Common myeloid progenitor, CD34-positive (primary cell): ENCODE measurements at regions of chr5 and their contacts with region 1.

Region 1: DNA sequence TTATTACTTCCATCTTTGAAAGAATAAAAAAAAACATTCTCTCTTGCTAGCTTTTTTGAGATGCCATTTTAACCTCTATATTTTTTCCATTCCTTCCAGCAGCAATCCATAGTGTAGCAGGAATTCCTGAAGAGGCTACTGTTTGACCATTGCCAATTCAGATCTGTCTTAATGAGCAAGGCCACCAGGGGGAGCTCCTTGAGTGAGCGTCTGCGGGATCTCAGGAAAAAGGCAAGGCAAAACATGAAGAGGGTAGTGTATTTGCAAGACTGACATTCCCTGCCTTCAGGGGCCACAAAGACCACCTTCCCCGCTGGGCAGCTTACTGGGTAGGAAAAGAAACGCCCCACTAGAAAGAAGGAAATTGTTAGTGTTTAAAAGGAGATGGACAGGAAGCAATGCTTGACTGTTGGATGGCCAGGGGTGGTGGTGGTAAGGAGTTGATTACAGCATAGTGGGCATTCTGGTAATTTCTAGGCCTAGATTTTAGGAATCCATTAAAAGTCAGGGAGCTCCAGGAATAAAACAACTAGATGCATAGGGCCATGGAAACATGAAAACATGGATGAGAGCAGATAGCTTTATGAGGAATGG is 206.6 kb upstream of the HAPLN1 start:
- DNase-seq: peak; percentile 36 to 42 (median 36)
- H3K4me3 ChIP-seq: no peak overlapping the region
- H3K27ac ChIP-seq: no peak overlapping the region
- H3K4me1 ChIP-seq: peaks cover 0 to 5% (median 2%) of the 10 kb centered on the region in 4 experiments
- H3K27me3 ChIP-seq: no peaks in the 10 kb centered on the region

Region 2: DNA sequence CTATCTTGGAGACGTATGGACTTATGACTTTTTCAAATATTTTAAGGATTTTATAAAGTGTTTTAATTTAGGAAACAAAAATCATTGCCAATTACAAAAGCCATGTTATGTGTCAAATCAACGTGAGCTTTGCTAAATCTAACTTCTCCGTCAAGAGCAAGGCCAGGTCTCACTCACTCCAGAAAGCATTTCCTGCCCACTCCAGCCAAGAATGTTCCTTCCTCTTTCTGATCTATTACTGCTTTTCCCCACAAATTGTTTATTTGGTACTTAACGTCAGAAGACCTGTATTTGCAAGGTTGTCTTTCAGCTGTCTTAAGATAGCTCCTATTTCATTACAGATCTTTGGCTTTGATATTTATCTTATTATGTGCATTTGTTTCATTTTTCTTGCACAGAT is 13.0 kb before region 1 on chr5:
- CTCF ChIA-PET with region 1: interaction called, 37 read pairs
- POLR2A ChIA-PET with region 1: no interaction called
- DNase-seq: peak in 2 of 3 donors; percentile 52 to 56
- H3K4me3 ChIP-seq: no peak overlapping the region
- H3K27ac ChIP-seq: no peak overlapping the region
- H3K4me1 ChIP-seq: peaks cover 0 to 20% (median 10%) of the 10 kb centered on the region in 4 experiments
- H3K27me3 ChIP-seq: no peaks in the 10 kb centered on the region

Region 3: GRCh38 chr5:83942155-83942554 is 14.9 kb after region 1 on chr5:
- CTCF ChIA-PET with region 1: interaction called, 18 read pairs
- POLR2A ChIA-PET with region 1: no interaction called
- DNase-seq: no peak
- H3K4me3 ChIP-seq: no peak overlapping the region
- H3K27ac ChIP-seq: no peak overlapping the region
- H3K4me1 ChIP-seq: peaks cover 0 to 8% (median 3%) of the 10 kb centered on the region in 4 experiments
- H3K27me3 ChIP-seq: no peaks in the 10 kb centered on the region

Region 4: DNA sequence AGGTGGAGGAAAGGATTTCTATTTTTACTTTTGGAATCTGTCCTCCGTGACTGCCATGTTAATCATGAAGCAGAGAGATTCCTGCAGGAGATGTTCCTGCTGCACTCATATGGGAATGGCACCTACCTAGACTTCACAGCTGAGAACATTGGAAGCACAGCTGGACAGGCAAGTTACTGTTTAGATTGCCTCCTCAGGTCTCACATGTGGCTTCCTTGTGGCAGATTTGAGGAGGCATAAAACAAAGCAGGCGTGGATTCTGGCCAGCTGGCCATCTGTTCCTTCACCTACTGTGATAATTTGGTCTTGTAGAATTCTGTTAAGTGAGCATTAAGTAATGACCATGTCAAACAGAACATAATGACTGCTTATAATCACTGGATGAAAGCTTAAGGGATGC is 264.0 kb after region 1 on chr5:
- CTCF ChIA-PET with region 1: no interaction called
- POLR2A ChIA-PET with region 1: no interaction called
- DNase-seq: no peak
- H3K4me3 ChIP-seq: no peak overlapping the region
- H3K27ac ChIP-seq: no peak overlapping the region
- H3K4me1 ChIP-seq: no peaks in the 10 kb centered on the region
- H3K27me3 ChIP-seq: no peaks in the 10 kb centered on the region